ENCODE measurements at regions of chr7 and their contacts with region 1.

Region 1: DNA sequence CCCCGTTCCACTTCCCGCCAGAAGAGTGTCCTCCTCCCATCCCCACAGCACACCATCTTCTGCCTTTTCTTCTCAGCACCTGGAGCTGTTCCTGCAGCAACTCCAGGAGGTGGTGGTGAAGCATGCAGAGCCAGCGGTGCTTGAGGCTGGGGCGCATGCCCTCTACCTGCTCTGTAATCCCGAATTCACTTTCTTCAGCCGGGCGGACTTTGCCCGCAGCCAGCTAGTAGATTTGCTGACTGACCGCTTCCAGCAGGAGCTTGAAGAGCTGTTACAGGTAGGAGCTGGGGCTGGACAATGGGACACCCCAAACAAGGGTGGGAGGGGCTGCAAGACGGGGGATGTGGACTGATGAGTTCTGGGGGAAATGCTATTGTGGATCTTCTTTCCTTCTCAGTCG is 19.1 kb upstream of the PVRIG start:
- DNase-seq: no peak
- ATAC-seq: 0 out of 6 replicates have a peak, but pooled peaks of 1 of the 2 experiments have one; percentile 30
- H3K4me3 ChIP-seq: no peak overlapping the region
- H3K27ac ChIP-seq: no peak overlapping the region
- H3K4me1 ChIP-seq: no peaks in the 10 kb centered on the region
- CTCF ChIP-seq: no peak
- EP300 ChIP-seq: no peak
- POLR2A ChIP-seq: no peak
- RAD21 ChIP-seq: no peak

Region 2: GRCh38 chr7:99990460-99990852 is 210.2 kb before region 1 on chr7:
- CTCF ChIA-PET with region 1: no interaction called
- POLR2A ChIA-PET with region 1: no interaction called
- DNase-seq: no peak
- ATAC-seq: no peak
- H3K4me3 ChIP-seq: no peak overlapping the region
- H3K27ac ChIP-seq: no peak overlapping the region
- H3K4me1 ChIP-seq: no peaks in the 10 kb centered on the region
- CTCF ChIP-seq: no peak
- EP300 ChIP-seq: no peak
- POLR2A ChIP-seq: no peak
- RAD21 ChIP-seq: no peak

Region 3: DNA sequence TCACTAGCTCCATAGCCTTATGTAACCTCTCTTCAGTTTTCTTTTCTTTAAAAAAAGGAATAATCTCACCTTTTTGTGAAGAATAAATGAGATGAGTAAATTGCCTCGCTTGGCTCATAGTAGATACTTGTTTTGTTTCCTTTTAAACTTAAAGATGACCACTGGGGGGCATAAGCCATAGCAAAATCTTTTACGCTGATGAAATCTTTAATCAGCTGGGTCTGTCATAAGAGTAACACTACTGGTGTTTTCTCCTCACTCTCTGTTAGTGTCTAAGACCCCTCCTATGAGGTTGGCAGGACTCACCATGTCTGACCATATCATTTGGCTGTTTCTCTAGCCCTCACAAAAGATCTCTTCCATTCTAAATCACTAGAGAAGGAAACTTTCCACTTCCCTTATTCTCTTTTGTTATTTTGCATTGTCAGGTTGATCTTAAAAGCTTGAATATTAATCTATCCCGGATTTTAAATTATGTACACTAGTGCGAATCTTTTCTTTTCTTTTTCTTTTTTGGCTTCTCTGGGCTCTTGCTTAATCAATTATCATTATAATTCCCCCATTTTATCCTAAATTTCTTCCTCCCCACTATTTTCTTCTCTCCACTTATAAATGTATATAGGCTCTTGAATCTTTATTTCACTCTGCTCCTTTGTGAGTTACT is 10.5 kb before region 1 on chr7:
- CTCF ChIA-PET with region 1: interaction called, 29 read pairs
- POLR2A ChIA-PET with region 1: no interaction called
- DNase-seq: peak; percentile 58 to 60
- ATAC-seq: peak; percentile 84 to 89
- H3K4me3 ChIP-seq: no peak overlapping the region
- H3K27ac ChIP-seq: peak overlapping the region; percentile 62 to 63; a peak in 3 of 6 replicates
- H3K4me1 ChIP-seq: peaks cover 4% of the 10 kb centered on the region; the same call in 2 of the 3 replicates
- CTCF ChIP-seq: peak; percentile 63
- EP300 ChIP-seq: no peak
- POLR2A ChIP-seq: no peak
- RAD21 ChIP-seq: peak; percentile 54 to 62; a peak in 4 of 5 replicates

Region 4: GRCh38 chr7:100221231-100221718 is 20.6 kb after region 1 on chr7:
- CTCF ChIA-PET with region 1: interaction called, 15 read pairs
- POLR2A ChIA-PET with region 1: no interaction called
- DNase-seq: no peak
- ATAC-seq: no peak
- H3K4me3 ChIP-seq: no peak overlapping the region
- H3K27ac ChIP-seq: no peak overlapping the region
- H3K4me1 ChIP-seq: no peaks in the 10 kb centered on the region
- CTCF ChIP-seq: no peak
- EP300 ChIP-seq: no peak
- POLR2A ChIP-seq: no peak
- RAD21 ChIP-seq: no peak

Measured in A549 (cell line).